ENCODE measurements at regions of chr12 and their contacts with region 1.

Region 1: GRCh38 chr12:39902823-39903222 is 203.1 kb downstream of the SLC2A13 start:
- DNase-seq: no peak
- ATAC-seq: peak in 1 of 8 donors; percentile 22
- H3K4me3 ChIP-seq: no peak overlapping the region
- H3K27ac ChIP-seq: no peak overlapping the region
- H3K4me1 ChIP-seq: peaks cover 0 to 27% (median 9%) of the 10 kb centered on the region in 9 donors
- H3K27me3 ChIP-seq: no peaks in the 10 kb centered on the region
- CTCF ChIP-seq: no peak

Region 2: GRCh38 chr12:39867631-39868327 is 35.0 kb before region 1 on chr12:
- intact Hi-C with region 1: loop called in 1 of 10 experiments (anchors 2 kb)
- DNase-seq: no peak
- ATAC-seq: no peak
- H3K4me3 ChIP-seq: no peak overlapping the region
- H3K27ac ChIP-seq: no peak overlapping the region
- H3K4me1 ChIP-seq: peaks cover 0 to 3% (median 0%) of the 10 kb centered on the region in 9 donors
- H3K27me3 ChIP-seq: no peaks in the 10 kb centered on the region
- CTCF ChIP-seq: no peak

Measured in heart right ventricle (tissue), 16 donors.